HEK293 (cell line): ENCODE measurements at regions of chr5 and their contacts with region 1.

Region 1: GRCh38 chr5:113336975-113337374 is 97.8 kb downstream of the TSSK1B start:
- H3K4me3 ChIP-seq: no peak overlapping the region
- H3K27ac ChIP-seq: no peak overlapping the region
- H3K4me1 ChIP-seq: no peaks in the 10 kb centered on the region
- CTCF ChIP-seq: peak; percentile 70

Region 2: GRCh38 chr5:113606298-113607134 is 269.5 kb after region 1 on chr5:
- CTCF ChIA-PET with region 1: interaction called, 11 read pairs
- POLR2A ChIA-PET with region 1: no interaction called
- H3K4me3 ChIP-seq: no peak overlapping the region
- H3K27ac ChIP-seq: no peak overlapping the region
- H3K4me1 ChIP-seq: no peaks in the 10 kb centered on the region; the same call in 1 of the 2 replicates
- CTCF ChIP-seq: peak; percentile 86